Vagina (tissue), 2 donors: ENCODE measurements at regions of chr12 and their contacts with region 1.

Region 1: GRCh38 chr12:106234449-106234848 is 13.4 kb downstream of the CKAP4 start:
- DNase-seq: no peak
- H3K4me3 ChIP-seq: no peak overlapping the region
- H3K27ac ChIP-seq: no peak overlapping the region
- H3K4me1 ChIP-seq: no peaks in the 10 kb centered on the region
- H3K27me3 ChIP-seq: no peaks in the 10 kb centered on the region
- CTCF ChIP-seq: no peak
- POLR2A ChIP-seq: no peak

Region 2: GRCh38 chr12:106282457-106283097 is 48.1 kb after region 1 on chr12:
- intact Hi-C with region 1: loop called (anchors 10 kb)
- DNase-seq: no peak
- H3K4me3 ChIP-seq: no peak overlapping the region
- H3K27ac ChIP-seq: no peak overlapping the region
- H3K4me1 ChIP-seq: no peaks in the 10 kb centered on the region
- H3K27me3 ChIP-seq: no peaks in the 10 kb centered on the region
- CTCF ChIP-seq: peak; percentile 36 to 73 (median 70)
- POLR2A ChIP-seq: no peak